MCF 10A (cell line): ENCODE measurements at regions of chr14 and their contacts with region 1.

Region 1: GRCh38 chr14:63993992-63994391 is 141.2 kb downstream of the SYNE2 start:
- DNase-seq: peak; percentile 18
- H3K4me3 Mint-ChIP-seq: no peak overlapping the region
- H3K27ac Mint-ChIP-seq: no peak overlapping the region
- H3K4me1 Mint-ChIP-seq: peaks cover 11% of the 10 kb centered on the region
- H3K27me3 Mint-ChIP-seq: no peaks in the 10 kb centered on the region
- CTCF ChIP-seq: peak; percentile 34

Region 2: GRCh38 chr14:63800651-63801375 is 193.2 kb before region 1 on chr14:
- CTCF ChIA-PET with region 1: interaction called, 6 read pairs
- POLR2A ChIA-PET with region 1: interaction called, 5 read pairs
- intact Hi-C with region 1: loop called (anchors 1 kb)
- DNase-seq: peak; percentile 40
- H3K4me3 Mint-ChIP-seq: no peak overlapping the region
- H3K27ac Mint-ChIP-seq: no peak overlapping the region
- H3K4me1 Mint-ChIP-seq: no peaks in the 10 kb centered on the region
- H3K27me3 Mint-ChIP-seq: no peaks in the 10 kb centered on the region
- CTCF ChIP-seq: no peak

Region 3: GRCh38 chr14:64026600-64026999 is 32.6 kb after region 1 on chr14:
- CTCF ChIA-PET with region 1: no interaction called
- POLR2A ChIA-PET with region 1: no interaction called
- intact Hi-C with region 1: no loop called
- DNase-seq: peak; percentile 10
- H3K4me3 Mint-ChIP-seq: no peak overlapping the region
- H3K27ac Mint-ChIP-seq: no peak overlapping the region
- H3K4me1 Mint-ChIP-seq: no peaks in the 10 kb centered on the region
- H3K27me3 Mint-ChIP-seq: no peaks in the 10 kb centered on the region
- CTCF ChIP-seq: no peak